GM13977 (cell line): ENCODE measurements at regions of chr12 and their contacts with region 1.

Region 1: DNA sequence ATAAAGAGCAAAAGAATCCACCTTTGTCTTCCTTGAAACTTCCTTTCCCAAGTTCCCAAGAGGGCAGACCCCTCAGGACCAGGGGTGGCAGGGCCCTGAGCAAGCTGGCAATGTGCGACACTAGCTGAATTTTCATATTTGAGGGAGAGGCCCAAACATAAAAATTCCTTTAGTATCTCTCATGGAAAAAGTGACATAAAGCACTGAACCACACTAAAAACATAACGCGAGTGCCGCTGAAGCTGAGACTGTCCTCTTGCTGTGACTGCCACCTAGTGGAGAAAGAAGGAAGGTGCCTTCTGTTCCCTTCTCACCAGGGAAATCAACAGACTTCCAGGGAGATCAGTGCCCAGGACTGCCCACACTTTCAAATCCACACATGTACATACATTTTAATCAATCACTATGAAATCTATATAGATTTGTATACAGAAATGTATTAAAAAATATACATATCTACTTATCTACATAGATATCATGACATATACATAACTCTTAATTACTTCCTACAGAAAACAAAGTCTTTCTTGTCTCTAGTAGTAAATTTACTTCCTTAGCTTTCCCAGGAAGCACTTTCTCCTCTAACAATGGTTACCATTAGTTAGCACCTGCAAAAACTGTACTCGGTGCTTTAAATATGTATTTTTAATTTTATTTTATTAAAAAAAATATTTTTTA is 53.8 kb downstream of the SSH1 start:
- DNase-seq: peak; percentile 88
- CTCF ChIP-seq: peak; percentile 88

Region 2: DNA sequence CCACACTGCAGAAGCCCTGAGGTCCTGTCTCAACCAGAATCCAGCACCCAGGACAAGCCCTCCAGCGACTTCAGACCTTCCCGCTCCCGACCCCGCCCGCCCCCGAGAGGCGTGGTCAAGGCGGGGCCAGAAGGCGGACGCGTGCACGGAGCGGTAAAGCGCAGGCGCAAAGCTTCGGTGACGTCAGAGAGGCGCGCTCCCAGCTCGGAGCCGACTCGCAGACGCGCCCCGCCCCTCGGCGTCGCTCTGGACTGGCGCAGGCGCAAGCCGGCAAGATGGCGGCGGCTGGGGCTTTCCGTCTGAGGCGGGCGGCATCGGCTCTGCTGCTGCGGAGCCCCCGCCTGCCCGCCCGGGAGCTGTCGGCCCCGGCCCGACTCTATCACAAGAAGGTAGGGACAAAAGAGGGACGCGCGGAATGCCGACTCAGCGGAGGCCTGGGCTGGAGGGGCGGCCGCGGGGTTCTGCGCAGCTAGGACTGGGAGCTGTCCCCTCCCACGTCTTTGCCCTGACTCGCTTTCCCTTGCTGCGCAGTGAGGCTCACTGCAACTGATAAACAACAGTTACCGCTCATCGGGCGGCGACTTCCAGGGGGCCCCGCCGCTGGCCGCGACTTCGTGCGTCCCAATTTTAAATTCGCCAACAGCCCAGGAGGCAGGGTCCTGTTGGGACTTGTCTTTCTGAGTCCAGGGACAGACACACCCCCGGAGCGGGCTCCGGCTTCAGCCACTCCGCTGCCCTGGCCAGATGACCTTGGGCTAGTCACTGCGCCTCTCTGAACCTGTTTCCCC is 241.0 kb before region 1 on chr12 and contains the start of gene ISCU:
- in situ Hi-C with region 1: loop called (anchors 5 kb)
- DNase-seq: peak; percentile 96
- CTCF ChIP-seq: no peak

Region 3: GRCh38 chr12:108664338-108665258 is 139.0 kb before region 1 on chr12:
- in situ Hi-C with region 1: loop called (anchors 5 kb)
- DNase-seq: peak; percentile 75
- CTCF ChIP-seq: peak; percentile 84

Region 4: DNA sequence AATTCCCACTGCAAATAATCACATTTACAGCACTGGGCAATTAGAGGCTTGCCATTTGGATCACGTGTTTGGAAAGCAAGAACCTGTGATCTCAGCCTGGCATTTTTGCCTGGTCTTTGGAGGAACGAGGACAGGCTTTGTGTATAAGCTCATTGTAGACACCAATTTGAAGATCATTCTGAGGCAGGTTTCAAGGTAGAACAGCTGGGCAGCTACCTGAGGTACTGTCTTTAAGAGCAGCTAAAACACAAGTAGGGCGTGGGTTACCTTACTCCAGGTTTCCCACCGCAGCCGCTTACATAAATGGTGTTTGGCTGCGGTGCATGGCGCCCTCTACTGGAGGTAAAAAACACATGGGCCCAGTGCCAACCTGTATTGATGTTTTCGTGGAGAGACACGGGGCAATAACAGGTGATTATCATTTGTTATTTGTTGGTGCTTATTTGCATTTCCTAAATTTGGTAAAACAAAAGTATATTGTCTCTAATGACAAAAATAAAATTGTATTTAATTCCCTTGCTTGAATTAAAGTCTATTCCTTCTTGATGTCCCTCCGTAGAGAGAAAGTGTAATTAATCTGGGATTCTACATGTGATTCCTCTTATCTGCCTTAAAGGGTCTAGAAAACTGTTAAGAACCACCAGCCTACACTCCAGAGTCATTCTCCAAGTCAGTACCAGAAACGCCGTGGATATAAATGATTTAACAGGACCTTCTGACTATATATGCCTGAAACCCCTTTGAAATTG is 147.6 kb after region 1 on chr12:
- in situ Hi-C with region 1: loop called (anchors 10 kb)
- DNase-seq: peak; percentile 58
- CTCF ChIP-seq: peak; percentile 89